Sciatic nerve (tissue), 2 donors: ENCODE measurements at regions of chr20 and their contacts with region 1.

Region 1: DNA sequence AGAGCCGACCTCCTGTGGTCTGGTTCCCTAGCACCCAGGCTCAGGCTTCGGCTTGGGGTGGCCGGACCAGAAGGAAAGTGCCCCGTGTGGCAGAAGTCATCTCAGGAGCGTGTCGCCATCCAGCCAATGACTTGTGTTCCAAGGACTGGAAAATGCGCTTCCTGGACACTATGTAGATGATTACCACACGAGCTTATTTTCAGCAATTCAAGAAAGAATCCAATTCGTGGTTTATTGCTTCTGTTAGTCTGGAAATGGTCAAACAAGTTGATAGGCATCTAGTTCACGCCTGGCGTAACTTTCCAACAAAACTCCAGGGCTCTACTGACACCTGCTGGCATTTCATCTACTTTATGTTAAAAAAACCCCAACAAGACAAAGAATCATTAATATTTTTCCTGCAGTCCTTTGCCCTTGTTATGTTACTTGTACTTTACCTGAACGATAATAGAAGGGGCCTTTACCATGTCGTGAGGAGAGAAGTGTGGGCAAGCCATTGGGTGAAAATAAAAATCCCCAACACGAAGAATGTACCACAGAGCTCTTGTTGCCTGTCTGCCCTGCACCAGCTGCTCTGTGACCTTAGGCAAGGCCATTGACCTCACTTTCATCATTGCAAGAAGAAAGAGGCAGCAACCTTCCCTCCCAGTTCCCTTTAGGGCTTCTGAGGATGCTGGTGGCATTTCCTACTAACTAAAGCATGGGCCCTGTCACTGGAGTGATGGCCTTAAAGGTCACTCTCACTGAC is 154.7 kb upstream of the LAMP5 start:
- DNase-seq: peak; percentile 56
- ATAC-seq: peak; percentile 80

Region 2: DNA sequence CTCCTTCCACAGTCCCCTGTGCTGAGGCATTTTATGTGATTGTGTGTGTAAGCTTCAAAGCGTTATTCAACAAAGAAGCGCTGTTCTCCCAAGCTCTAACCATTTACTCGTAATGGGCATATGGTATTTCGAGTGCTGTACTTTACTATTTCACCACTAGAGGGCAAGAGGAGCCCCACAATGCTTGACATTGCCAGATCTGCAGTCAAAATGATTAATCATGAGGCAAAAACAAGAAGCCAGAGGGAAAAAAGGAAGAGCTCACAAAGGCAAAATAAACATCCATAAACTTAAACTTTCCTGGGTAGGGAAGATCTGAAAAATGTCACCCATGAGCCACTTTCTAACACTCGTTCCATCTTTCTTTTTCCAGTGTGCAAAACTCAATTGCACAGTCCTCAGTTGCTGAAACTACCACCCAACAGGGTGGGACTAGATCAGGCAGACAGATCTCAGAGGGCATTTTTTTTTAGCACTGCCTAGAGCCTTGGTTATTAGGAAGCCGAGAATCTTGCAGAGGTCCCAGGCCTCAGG is 505.9 kb before region 1 on chr20:
- intact Hi-C with region 1: loop called (anchors 10 kb)
- DNase-seq: no peak
- ATAC-seq: peak; percentile 92

Region 3: GRCh38 chr20:9130521-9130920 is 229.2 kb before region 1 on chr20:
- intact Hi-C with region 1: no loop called
- DNase-seq: no peak
- ATAC-seq: no peak